ENCODE measurements at regions of chr17 and their contacts with region 1.

Region 1: DNA sequence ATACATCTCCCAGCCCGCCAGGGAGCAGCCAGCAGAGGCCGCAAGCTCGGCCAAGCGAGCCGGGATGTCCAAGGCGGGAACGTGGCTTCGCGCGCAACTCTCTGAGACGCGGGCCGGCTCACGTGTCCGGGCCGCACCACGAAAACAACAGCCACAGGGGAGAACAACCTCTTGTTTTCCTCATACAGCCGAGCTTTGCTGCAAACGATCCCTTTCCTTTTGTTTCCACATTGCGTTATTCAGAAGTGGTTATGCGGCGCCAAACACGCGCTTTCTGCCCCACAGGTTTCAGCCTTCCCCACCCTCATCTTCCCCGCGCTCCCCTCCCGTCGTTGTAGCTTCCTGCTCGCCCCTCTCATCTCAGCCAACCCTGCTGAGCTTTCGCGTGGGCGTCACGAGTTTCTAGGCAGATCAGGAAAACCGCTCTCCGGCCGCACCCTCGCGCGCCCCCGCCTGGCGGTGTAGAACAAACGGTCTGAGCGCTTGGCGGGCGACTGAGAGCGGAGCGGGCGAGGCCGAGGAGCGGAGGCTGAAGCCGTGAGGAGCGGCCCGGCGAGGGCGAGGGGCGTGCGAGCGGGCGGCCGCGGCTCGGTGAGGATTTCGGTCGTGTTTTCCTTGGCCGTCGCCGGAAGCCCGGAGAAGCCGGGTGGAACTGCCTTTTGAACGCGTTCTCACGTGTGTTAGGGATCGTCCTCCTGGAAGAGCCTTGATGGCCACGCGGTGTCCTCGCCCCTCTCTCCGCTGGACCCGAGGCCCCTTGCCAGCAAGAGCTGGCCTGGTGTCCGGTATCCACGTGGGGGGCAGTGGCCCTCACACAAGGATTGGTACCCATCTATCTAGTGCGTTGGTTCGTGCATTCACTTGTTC is 6.6 kb upstream of the SMARCD2 start:
- DNase-seq: peak; percentile 95 to 98
- ATAC-seq: peak; percentile 97 to 98 (median 97)
- H3K4me3 ChIP-seq: peak overlapping the region; percentile 61
- H3K27ac ChIP-seq: peak overlapping the region; percentile 71
- H3K4me1 ChIP-seq: peaks cover 9% of the 10 kb centered on the region
- H3K27me3 ChIP-seq: no peaks in the 10 kb centered on the region
- CTCF ChIP-seq: peak; percentile 59

Region 2: GRCh38 chr17:64036198-64036922 is 187.3 kb after region 1 on chr17:
- intact Hi-C with region 1: no loop called
- DNase-seq: no peak
- ATAC-seq: no peak
- H3K4me3 ChIP-seq: no peak overlapping the region
- H3K27ac ChIP-seq: no peak overlapping the region
- H3K4me1 ChIP-seq: no peaks in the 10 kb centered on the region
- H3K27me3 ChIP-seq: no peaks in the 10 kb centered on the region
- CTCF ChIP-seq: no peak

Region 3: DNA sequence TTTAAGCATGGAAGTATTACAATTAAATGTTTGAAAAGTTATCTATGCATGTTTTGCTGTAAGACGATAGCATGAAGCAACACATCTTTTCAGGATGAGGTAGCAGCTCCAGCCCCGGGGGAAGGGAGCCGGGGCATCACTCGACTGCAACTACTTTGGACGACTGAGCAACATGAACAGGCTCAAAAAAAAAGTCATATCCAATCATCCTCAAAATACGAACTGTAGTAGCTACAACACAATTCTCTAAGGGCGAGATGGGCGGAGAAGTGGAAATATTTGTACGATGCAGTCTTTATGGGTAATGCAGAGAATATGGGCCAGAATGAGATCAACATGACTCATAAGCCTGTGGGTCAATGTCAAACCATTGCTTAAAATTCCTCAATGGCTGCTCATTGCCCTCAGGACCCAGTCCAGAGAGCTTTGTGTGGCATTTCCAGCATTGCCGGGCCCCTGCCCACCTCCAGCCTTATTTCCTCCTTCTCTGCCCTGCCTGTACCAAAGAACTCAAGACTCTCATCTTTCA is 830.7 kb after region 1 on chr17:
- intact Hi-C with region 1: loop called in 1 of 2 experiments (anchors 5 kb)
- DNase-seq: peak; percentile 63 to 65
- ATAC-seq: peak in 1 of 4 donors; percentile 11
- H3K4me3 ChIP-seq: no peak overlapping the region
- H3K27ac ChIP-seq: no peak overlapping the region
- H3K4me1 ChIP-seq: no peaks in the 10 kb centered on the region
- H3K27me3 ChIP-seq: no peaks in the 10 kb centered on the region
- CTCF ChIP-seq: no peak